Head of caudate nucleus (tissue), 42 donors: ENCODE measurements at regions of chr14 and their contacts with region 1.

Region 1: DNA sequence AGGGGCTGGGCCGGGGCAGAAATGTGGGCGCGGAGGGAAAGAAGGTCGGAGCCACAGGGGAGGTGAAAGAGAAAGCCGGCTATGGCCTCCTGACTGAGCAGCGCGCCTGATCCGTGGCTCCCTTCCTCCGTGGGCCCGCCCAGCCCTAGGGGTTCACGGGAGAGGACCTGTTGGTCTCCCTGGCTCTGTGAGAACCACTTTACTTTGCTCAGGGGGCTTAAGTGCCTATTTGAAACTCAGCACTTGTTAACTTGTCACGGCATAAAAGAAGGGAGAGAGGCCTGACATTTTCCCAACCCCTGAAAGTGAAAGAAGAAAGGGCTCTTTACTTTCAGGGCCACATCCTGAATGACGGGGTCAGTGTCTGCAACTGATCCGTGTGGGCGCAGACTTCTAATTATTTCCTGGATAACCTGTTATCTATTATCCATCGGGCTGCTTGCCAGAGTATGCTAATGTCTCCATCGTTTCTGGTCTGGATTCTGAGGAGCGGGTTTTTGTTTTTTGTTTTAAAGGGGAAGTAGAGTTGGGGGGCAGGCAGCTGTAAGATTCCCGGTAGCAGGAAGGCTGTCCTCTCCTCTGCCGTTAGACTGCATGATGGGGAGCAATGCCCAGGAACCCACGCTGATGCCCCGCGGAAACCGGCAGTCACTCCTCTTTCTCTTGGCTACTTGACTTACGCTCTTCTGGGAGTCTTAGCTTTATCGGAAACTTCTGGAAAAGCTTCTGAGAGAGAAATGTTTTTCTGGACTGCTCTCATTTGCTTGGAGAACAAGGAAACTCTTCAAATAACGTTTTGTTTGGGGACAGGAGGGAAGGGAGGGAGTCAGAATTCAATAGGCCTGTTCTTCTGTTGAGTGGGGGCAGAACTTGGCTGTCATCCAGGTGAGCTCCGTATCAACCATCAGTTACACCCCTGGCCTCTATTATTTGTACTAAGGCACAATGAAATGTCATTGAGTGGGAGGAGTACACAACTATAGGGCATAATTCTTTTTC is 127.7 kb upstream of the MAX start:
- DNase-seq: peak; percentile 45 to 96 (median 84)

Region 2: DNA sequence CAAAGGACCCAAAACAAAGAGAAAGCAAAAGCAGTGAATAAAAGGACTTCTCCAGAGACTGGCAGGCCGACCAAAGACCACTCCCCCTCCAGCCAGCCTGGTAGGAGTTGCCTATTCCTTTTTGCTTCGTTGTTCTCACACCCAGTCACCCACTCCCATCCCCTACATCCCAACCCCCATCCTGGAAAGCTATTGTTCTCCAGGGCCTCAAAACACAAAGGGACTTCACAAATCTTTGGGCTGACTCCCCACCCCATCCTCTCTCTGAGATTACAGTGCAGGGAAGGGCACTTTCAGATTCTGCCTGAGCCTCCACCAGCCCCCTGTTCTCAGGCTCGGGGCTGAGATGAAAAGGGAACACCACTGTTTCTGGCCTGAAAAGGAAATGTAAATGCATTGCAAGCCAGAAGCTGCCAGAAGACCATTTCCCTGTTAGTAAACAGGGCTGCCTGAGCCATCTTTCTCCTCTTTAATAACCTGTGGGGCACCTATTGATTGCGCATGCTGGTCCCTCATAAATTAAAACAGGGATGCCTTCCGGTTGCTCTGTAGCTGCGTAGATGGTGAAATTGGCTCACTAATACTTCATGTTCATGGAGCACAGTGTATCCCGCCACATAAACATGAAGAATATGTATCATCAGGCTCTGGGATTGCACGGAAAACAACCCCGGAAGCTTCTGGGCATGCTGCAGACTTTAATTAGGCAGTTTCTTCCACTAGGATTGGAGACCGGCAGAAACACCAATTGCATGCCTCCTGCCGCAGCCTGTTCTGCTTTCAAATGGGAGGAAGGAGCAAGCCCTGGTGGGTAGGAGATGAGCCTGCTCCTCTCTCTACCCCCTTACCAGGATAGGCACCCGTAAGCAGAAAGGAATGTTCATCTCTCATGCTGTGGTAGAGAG is 52.2 kb after region 1 on chr14:
- intact Hi-C with region 1: loop called (anchors 2 kb)
- DNase-seq: peak; percentile 60 to 95 (median 86)